GM12878 (cell line): ENCODE measurements at regions of chr18 and their contacts with region 1.

Region 1: DNA sequence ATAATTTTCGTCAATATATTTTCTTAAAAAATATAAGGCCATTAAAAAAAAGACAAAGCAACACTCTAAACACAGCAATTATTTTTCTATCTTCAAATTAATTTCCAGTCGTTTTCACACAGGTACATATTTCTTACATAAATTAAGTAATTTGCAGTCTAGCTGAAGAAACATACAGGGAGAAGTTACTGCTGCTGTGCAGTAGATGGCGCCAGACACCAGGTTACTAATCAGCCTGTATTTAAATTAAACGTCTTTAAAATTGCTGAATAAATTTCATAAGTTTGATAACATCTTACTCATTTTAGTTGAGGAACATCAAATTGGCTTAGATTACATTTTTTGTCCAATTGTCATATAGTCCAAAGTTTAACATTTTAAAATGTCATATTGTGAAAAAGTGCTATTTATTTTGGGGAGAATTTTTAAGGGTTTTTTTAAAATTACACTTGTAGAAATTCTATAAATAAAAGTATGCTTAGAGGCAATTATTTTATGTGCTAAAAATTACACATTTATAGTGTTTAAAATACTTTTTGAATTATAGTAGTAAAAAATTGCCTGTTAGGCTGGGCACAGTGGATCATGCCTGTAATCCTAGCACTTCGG is 88.4 kb downstream of the PMAIP1 start:
- DNase-seq: no peak
- ATAC-seq: peak; percentile 81
- H3K4me3 ChIP-seq: no peak overlapping the region
- H3K27ac ChIP-seq: no peak overlapping the region
- H3K4me1 ChIP-seq: no peaks in the 10 kb centered on the region
- H3K27me3 ChIP-seq: no peaks in the 10 kb centered on the region
- CTCF ChIP-seq: peak; percentile 83 to 90 (median 87)
- EP300 ChIP-seq: no peak
- POLR2A ChIP-seq: no peak
- RAD21 ChIP-seq: peak; percentile 96

Region 2: DNA sequence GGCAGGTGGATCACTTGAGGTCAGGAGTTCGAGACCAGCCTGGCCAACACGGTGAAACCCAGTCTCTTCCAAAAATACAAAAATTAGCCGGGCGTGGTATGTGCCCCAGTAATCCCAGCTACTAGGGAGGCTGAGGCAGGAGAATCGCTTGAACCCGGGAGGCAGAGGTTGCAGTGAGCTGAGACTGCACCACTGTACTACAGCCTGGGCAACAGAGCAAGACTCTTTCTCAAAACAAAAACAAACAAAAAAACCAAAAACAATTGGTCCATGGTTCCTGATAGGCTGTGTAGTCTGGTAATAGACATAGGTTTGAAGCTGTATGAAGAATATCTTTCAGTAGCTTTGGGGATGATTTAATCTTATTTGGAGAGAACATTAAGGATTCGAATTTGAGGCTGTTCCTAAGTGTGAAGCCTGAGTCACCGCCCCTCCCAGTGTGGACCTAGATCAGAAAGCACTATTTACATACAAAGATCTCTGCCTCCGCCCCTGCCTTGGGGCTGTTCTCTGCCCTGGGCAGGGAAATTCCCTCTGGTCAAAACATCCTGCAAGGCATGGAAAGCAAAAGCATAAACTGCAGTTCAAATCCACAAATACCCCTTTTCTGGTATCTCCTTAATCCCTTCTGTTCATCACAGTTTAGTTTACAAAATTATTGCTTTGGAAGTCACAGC is 141.2 kb before region 1 on chr18:
- CTCF ChIA-PET with region 1: interaction called, 9 read pairs
- POLR2A ChIA-PET with region 1: no interaction called
- RAD21 ChIA-PET with region 1: interaction called, 5 read pairs
- SMC1A ChIA-PET with region 1: interaction called, 28 read pairs
- in situ Hi-C with region 1: no loop called
- intact Hi-C with region 1: no loop called
- DNase-seq: peak; percentile 83
- ATAC-seq: peak; percentile 93
- H3K4me3 ChIP-seq: peak overlapping the region; percentile 8; the same call in 1 of the 2 replicates
- H3K27ac ChIP-seq: peak overlapping the region; percentile 82
- H3K4me1 ChIP-seq: peaks cover 24% of the 10 kb centered on the region
- H3K27me3 ChIP-seq: no peaks in the 10 kb centered on the region
- CTCF ChIP-seq: no peak
- EP300 ChIP-seq: peak in 1 of 2 experiments; percentile 37; a peak in 1 of 4 replicates
- POLR2A ChIP-seq: no peak
- RAD21 ChIP-seq: peak; percentile 26; the same call in 1 of the 2 replicates

Region 3: DNA sequence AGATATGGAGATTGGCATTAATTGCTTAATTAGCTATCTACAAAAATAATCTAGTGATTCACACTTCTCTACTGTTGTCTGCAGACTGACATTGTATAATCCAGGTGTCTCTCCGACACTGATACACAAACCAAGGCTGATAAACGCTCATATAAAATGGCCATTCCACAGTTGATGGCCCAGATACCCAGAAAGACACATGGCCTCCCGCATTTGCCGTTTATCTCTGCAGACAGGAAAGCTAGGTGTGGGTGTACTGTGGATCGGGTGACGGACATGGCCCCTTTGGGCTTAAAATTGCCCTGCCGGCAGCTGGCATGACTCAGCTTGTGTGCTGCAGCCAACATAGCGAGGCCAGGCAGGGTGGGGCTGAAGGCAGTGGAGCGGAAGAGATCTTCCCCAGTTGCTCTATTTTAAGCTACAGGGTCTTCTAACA is 69.9 kb before region 1 on chr18:
- CTCF ChIA-PET with region 1: interaction called, 28 read pairs
- POLR2A ChIA-PET with region 1: no interaction called
- RAD21 ChIA-PET with region 1: interaction called, 12 read pairs
- SMC1A ChIA-PET with region 1: interaction called, 81 read pairs
- in situ Hi-C with region 1: no loop called
- intact Hi-C with region 1: no loop called
- DNase-seq: peak; percentile 80
- ATAC-seq: peak; percentile 82
- H3K4me3 ChIP-seq: peak overlapping the region; percentile 5; the same call in 1 of the 2 replicates
- H3K27ac ChIP-seq: peak overlapping the region; percentile 74
- H3K4me1 ChIP-seq: peaks cover 47% of the 10 kb centered on the region
- H3K27me3 ChIP-seq: no peaks in the 10 kb centered on the region
- CTCF ChIP-seq: no peak
- EP300 ChIP-seq: peak in 1 of 2 experiments; percentile 27; a peak in 1 of 4 replicates
- POLR2A ChIP-seq: peak; percentile 44; the same call in 1 of the 2 replicates
- RAD21 ChIP-seq: no peak

Region 4: DNA sequence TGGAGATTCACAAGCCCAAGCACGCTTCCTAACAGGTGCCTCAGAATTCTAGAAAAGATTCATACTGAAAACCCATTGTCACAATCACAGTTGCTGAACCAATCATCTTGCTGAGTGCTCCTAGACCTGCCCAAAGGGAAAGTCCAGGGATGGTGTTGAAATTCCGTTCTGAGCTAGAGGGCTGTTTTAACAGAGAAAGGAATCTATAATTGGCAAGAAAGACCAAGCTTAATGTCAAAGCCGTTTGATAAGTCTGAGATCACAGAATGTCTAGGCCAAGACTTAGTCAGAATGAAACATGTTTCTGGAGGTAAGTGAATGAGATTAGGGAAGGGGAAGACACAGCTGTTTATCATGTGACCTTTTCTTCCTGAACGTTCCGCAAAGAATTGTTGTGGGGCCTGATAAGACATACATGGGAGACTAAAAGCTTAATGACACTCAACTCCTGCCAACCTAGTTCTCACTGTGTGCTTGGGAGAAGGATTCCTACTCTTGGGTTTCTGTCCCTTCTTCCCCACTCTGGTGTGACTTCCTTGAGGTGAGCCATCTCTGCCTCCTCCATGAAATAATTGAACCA is 60.9 kb before region 1 on chr18:
- CTCF ChIA-PET with region 1: interaction called, 28 read pairs
- POLR2A ChIA-PET with region 1: no interaction called
- RAD21 ChIA-PET with region 1: interaction called, 12 read pairs
- SMC1A ChIA-PET with region 1: interaction called, 81 read pairs
- in situ Hi-C with region 1: no loop called
- intact Hi-C with region 1: no loop called
- DNase-seq: peak; percentile 98
- ATAC-seq: peak; percentile 82
- H3K4me3 ChIP-seq: no peak overlapping the region
- H3K27ac ChIP-seq: peak overlapping the region; percentile 93
- H3K4me1 ChIP-seq: peaks cover 49% of the 10 kb centered on the region
- H3K27me3 ChIP-seq: no peaks in the 10 kb centered on the region
- CTCF ChIP-seq: no peak
- EP300 ChIP-seq: peak; percentile 63 to 67; a peak in 3 of 4 replicates
- POLR2A ChIP-seq: no peak
- RAD21 ChIP-seq: no peak

Region 5: DNA sequence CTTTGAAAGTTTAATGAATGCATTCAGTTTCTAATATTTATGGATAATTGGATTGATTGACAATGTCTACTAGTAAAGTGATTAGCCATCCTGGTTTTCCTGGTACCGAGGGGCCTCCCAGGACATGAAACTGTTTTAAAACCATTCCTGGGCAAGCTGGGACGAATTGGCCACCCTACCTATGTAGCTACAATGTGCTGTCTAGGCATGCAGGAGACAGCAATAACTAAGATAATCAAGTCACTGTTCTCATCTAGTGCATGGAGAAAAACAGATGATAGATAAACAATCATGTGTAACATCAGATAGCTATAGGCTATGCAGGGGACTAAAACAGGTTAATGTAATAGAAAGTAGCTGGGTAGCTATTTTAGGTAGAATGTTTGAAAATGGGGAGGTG is 21.3 kb before region 1 on chr18:
- CTCF ChIA-PET with region 1: interaction called, 23 read pairs
- POLR2A ChIA-PET with region 1: interaction called, 3 read pairs
- RAD21 ChIA-PET with region 1: interaction called, 5 read pairs
- SMC1A ChIA-PET with region 1: interaction called, 10 read pairs
- in situ Hi-C with region 1: no loop called
- intact Hi-C with region 1: no loop called
- DNase-seq: no peak
- ATAC-seq: no peak
- H3K4me3 ChIP-seq: no peak overlapping the region
- H3K27ac ChIP-seq: no peak overlapping the region
- H3K4me1 ChIP-seq: peaks cover 2% of the 10 kb centered on the region
- H3K27me3 ChIP-seq: no peaks in the 10 kb centered on the region
- CTCF ChIP-seq: no peak
- EP300 ChIP-seq: no peak
- POLR2A ChIP-seq: no peak
- RAD21 ChIP-seq: no peak

Region 6: DNA sequence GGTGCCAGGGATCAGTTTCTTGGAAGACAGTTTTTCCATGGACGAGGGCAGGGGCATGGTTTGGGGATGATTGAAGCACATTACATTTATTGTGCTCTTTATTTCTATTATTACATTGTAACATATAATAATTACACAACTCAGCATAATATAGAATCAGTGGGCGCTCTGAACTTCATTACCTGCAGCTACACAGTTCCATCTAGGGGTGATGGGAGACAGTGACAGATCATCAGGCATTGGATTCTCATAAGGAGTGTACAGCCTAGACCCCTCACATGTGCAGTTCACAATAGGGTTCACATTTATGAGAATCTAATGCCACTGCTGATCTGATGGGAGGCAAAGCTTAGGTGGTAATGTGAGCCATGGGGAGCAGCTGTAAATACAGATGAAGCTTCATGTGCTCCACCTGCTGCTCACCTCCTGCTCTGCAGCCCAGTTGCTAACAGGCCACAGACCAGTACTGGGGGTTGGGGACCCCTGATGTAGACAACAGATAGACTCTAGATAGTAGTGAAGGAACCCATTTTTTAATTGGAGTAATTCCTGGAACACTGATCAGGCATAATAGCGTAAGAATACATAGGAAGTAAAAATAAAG is 425.8 kb after region 1 on chr18:
- CTCF ChIA-PET with region 1: interaction called, 18 read pairs
- POLR2A ChIA-PET with region 1: no interaction called
- RAD21 ChIA-PET with region 1: interaction called, 9 read pairs
- SMC1A ChIA-PET with region 1: interaction called, 5 read pairs
- in situ Hi-C with region 1: loop called (anchors 5 kb)
- intact Hi-C with region 1: loop called (anchors 2 kb)
- DNase-seq: no peak
- ATAC-seq: peak; percentile 74
- H3K4me3 ChIP-seq: no peak overlapping the region
- H3K27ac ChIP-seq: no peak overlapping the region
- H3K4me1 ChIP-seq: no peaks in the 10 kb centered on the region
- H3K27me3 ChIP-seq: no peaks in the 10 kb centered on the region
- CTCF ChIP-seq: peak; percentile 40 to 57 (median 50)
- EP300 ChIP-seq: no peak
- POLR2A ChIP-seq: no peak
- RAD21 ChIP-seq: peak; percentile 46

Region 7: DNA sequence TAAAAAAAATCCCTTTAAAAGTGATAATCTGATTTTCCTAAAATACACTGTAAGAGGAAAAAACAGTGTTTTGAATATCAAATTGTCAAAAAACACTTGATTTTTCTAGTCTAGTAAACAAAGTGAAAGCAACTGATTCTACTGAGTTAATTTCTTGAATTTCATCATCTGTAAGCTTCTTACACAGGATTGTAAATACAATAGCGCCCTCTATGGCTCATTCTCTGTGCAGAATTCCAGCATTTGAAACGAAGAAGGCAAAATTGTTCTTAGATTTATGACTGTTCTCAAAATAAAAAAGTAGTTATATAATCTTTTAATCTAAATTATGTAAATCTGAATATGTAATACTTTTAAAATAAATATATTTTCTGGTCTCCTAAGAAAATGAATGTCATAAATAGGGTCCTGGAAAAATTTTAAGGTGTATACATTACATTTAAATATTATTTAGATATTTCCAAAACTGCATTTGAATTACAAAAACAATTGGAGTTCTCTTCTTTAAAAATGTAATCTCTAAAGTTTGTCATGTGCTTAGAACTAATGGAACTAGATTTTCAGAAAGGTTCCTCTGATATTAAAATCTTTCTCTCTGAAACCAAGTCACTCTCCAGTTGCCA is 561.2 kb after region 1 on chr18:
- CTCF ChIA-PET with region 1: interaction called, 25 read pairs
- POLR2A ChIA-PET with region 1: no interaction called
- RAD21 ChIA-PET with region 1: interaction called, 10 read pairs
- SMC1A ChIA-PET with region 1: interaction called, 13 read pairs
- in situ Hi-C with region 1: loop called (anchors 5 kb)
- intact Hi-C with region 1: loop called (anchors 2 kb)
- DNase-seq: no peak
- ATAC-seq: peak; percentile 67
- H3K4me3 ChIP-seq: no peak overlapping the region
- H3K27ac ChIP-seq: no peak overlapping the region
- H3K4me1 ChIP-seq: no peaks in the 10 kb centered on the region
- H3K27me3 ChIP-seq: no peaks in the 10 kb centered on the region
- CTCF ChIP-seq: peak; percentile 57 to 82 (median 66)
- EP300 ChIP-seq: no peak
- POLR2A ChIP-seq: no peak
- RAD21 ChIP-seq: peak; percentile 88